MCF 10A (cell line): ENCODE measurements at regions of chr7 and their contacts with region 1.

Region 1: DNA sequence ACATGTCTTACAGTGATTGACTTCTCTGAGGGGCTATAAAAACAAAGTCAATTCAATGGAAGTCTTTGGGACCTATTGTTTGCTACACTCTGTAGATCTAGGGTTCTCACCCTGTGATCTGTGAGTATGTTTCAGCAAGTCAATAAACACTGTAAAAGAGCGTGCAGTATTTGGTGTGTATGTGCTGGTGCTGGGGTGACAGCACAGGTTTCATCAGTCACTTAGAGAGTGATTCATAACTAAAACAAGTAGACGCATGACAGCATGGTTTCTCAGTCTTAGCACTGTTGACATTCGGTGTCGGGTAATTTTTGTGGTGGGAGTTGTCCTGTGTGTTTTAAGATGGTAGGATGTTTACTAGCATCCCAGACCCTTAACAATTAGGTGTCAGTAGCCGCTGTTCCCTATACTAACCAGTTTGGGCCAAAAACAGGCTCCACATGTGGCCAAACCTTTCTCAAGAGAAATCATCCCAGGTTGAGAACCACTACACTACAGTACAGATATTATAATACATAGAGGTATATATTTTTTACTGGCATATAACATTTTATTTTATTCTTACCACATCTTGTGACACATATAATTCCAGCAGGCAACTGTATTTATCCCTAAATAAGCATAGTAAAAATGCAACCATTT is 411.8 kb downstream of the ARL4A start:
- DNase-seq: peak; percentile 71
- H3K4me3 Mint-ChIP-seq: no peak overlapping the region
- H3K27ac Mint-ChIP-seq: peak overlapping the region; percentile 79
- H3K4me1 Mint-ChIP-seq: peaks cover 8% of the 10 kb centered on the region
- H3K27me3 Mint-ChIP-seq: no peaks in the 10 kb centered on the region
- CTCF ChIP-seq: no peak

Region 2: GRCh38 chr7:12974451-12975166 is 124.7 kb before region 1 on chr7:
- CTCF ChIA-PET with region 1: no interaction called
- POLR2A ChIA-PET with region 1: no interaction called
- intact Hi-C with region 1: no loop called
- DNase-seq: no peak
- H3K4me3 Mint-ChIP-seq: no peak overlapping the region
- H3K27ac Mint-ChIP-seq: no peak overlapping the region
- H3K4me1 Mint-ChIP-seq: no peaks in the 10 kb centered on the region
- H3K27me3 Mint-ChIP-seq: no peaks in the 10 kb centered on the region
- CTCF ChIP-seq: no peak

Region 3: GRCh38 chr7:12985228-12985627 is 114.0 kb before region 1 on chr7:
- CTCF ChIA-PET with region 1: interaction called, 3 read pairs
- POLR2A ChIA-PET with region 1: no interaction called
- intact Hi-C with region 1: loop called (anchors 10 kb)
- DNase-seq: no peak
- H3K4me3 Mint-ChIP-seq: no peak overlapping the region
- H3K27ac Mint-ChIP-seq: no peak overlapping the region
- H3K4me1 Mint-ChIP-seq: peaks cover 10% of the 10 kb centered on the region
- H3K27me3 Mint-ChIP-seq: no peaks in the 10 kb centered on the region
- CTCF ChIP-seq: no peak

Region 4: DNA sequence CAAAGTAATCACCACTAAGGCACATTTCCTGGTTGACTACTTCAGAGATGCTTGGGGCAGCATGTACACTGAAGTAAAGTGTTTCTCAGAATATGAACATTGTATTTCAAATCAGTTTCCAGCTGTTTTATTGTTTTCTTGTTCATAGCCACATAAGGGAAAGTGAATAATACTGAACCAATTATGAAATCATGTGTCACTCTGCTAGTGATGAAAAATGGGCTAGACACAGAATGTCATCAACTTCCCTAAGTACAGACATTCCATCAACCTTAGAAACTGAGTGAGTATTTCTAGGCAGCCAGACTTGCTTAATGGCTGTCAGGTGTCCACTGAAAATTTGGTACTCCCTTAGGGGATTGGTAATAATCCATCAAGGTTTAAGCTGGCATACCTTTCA is 191.7 kb after region 1 on chr7:
- CTCF ChIA-PET with region 1: no interaction called
- POLR2A ChIA-PET with region 1: no interaction called
- intact Hi-C with region 1: no loop called
- DNase-seq: peak; percentile 26
- H3K4me3 Mint-ChIP-seq: no peak overlapping the region
- H3K27ac Mint-ChIP-seq: no peak overlapping the region
- H3K4me1 Mint-ChIP-seq: no peaks in the 10 kb centered on the region
- H3K27me3 Mint-ChIP-seq: peaks cover 9% of the 10 kb centered on the region
- CTCF ChIP-seq: no peak